ENCODE measurements at regions of chr2 and their contacts with region 1.

Region 1: GRCh38 chr2:69652221-69652651 is 8.7 kb upstream of the AAK1 start:
- DNase-seq: no peak
- CTCF ChIP-seq: no peak

Region 2: DNA sequence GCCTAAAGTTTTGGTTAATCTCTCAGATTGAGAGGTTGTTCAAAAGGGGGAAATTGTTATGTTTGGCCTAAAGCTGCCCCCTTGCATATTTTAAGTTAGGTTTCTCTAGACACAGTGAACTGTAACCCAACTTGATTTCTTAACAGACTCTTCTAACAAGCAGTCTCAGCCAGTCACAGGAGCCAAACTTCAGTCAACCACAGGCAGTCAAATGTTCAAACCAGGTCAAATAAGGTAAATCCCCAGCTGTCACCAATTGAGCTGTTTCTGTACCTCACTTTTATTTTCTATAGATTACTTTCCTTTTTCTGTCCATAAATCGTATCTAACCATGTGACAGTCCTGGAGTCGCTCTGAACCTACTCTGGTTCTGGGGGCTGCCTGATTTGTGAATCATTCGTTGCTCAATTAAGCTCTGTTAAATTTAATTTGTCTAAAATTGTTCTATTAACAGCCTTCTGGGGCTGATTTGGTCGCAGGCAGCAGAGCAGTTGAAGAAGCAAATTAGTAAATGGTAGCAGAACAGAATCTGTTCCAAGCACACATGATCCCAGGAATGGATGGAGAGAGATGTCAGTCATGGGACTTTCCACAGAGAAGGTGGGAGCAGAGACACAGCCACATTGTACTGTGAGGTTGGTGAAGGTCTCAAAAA is 198.6 kb before region 1 on chr2:
- in situ Hi-C with region 1: no loop called
- DNase-seq: peak; percentile 49
- CTCF ChIP-seq: no peak

Region 3: GRCh38 chr2:69704446-69704845 is 52.2 kb after region 1 on chr2:
- in situ Hi-C with region 1: loop called (anchors 10 kb)
- DNase-seq: no peak
- CTCF ChIP-seq: no peak

Measured in GM13977 (cell line).